HAP-1 (cell line): ENCODE measurements at regions of chr17 and their contacts with region 1.

Region 1: DNA sequence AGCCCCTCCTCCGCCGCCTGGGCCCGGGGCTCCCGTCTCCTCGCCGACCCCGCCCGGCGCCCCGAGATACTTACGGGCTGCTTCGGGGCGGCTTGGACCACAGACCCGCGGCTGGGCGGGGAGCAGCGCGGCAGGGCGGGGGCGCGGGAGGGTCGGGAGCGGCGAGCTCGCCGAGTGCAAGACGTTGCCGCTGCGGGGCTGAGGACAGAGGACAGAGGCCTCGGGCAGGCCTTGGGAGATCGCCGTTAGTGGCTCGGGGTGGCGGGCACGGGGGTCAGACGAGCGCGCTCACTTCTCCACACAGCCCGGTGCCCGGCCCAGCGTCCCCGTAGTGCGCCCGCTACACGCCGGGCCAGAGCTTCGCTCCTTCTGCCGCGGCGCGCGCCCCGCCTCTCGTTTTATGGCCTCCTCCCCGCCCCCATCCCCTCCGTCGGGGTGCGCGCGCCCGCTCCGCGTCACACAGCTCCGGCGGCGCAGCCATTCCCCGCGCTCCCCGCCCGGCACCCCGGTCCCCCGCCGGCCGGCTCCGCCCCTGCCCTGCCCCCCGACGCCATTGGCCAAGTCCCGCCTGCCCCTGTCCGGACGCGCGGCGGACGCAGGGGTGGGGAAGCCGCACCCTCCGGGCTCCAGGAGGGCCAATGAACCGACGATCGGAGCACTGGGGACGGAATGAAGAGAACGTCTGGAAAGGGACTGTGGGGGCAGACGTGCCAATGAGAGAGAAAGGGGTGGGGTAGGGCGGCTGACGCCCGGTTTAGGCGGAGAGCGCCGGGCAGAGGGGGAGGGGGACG is at the start of gene TOB1:
- DNase-seq: peak; percentile 92 to 98
- H3K4me3 ChIP-seq: peak within 1 kb of the TSS; percentile 70
- H3K4me1 ChIP-seq: peaks cover 23% of the 10 kb centered on the region
- H3K27me3 ChIP-seq: no peaks in the 10 kb centered on the region

Region 2: DNA sequence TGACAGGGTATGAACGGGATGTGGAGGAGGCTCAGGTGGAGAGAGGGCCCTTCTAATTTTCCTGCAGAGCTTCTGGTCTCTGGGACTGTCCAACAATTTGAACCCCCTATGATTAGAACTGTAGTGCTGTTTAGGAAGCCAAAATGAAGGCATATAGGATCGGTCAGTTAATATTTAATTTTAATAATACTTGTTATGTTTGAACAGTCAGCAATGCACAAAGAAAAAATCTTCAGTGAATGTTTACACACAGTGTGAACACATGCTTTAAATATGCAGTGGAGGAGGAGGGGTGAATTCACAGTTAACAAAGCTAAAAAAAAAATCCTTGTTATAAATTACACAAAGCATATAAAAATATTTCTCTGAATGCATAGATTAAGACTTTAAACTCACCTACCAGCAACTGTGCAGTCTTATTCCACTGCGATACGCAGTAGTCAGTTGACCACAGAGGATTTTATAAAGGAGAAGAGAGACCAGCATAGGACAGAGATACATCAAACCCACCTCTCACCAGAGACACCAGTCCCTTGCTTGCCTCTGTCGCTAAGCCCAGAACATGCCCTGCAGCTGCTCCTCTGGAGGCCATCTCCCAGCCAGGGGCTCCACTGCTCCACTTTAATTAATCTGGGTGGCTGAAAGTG is 173.0 kb before region 1 on chr17:
- in situ Hi-C with region 1: no loop called
- DNase-seq: no peak
- H3K4me3 ChIP-seq: no peak overlapping the region
- H3K4me1 ChIP-seq: no peaks in the 10 kb centered on the region
- H3K27me3 ChIP-seq: no peaks in the 10 kb centered on the region

Region 3: GRCh38 chr17:50771991-50772785 is 94.0 kb before region 1 on chr17:
- in situ Hi-C with region 1: no loop called
- DNase-seq: no peak
- H3K4me3 ChIP-seq: no peak overlapping the region
- H3K4me1 ChIP-seq: no peaks in the 10 kb centered on the region
- H3K27me3 ChIP-seq: no peaks in the 10 kb centered on the region

Region 4: DNA sequence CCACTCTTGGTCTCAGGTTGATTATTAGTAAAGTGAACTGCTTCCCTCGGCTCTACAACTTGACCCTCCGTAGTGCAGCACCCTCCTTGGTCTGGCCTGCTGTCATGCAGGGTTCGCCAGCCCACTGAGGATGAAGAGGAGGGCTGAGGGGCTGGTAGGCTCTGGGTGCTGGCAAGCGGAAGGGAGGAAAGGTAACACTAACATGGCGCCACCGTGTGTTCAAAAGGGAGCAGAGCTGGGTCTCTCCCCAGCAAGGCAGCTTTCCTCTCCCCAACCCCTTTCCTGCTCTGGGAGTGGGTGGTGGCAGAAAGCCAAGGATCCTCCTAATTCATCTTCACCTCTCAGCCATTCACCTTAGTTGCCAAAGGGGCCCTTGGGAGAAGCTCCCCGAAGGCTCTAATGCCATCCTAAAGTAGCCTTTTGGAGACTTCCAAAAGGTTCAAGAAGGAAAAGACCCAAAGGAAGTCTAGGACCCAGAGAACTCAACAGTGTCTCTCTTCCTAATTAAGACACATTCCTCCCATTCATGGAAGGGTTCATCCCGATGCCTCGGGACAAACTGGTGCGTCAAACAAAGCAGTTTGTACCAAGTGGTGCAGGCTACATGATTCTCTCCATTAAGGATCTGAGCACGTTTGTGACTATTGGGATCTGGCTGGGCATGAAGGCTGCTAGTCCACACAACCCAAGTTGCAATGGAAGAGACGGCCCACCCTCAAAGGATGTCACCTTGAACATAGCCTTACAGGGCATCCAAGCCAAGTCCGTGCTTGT is 90.8 kb after region 1 on chr17:
- in situ Hi-C with region 1: loop called (anchors 5 kb)
- DNase-seq: peak; percentile 66 to 83
- H3K4me3 ChIP-seq: no peak overlapping the region
- H3K4me1 ChIP-seq: no peaks in the 10 kb centered on the region
- H3K27me3 ChIP-seq: no peaks in the 10 kb centered on the region

Region 5: GRCh38 chr17:51153210-51154072 is 287.3 kb after region 1 on chr17 and contains the start of gene NME1:
- in situ Hi-C with region 1: loop called (anchors 10 kb)
- DNase-seq: peak; percentile 96 to 100
- H3K4me3 ChIP-seq: peak within 1 kb of the TSS; percentile 79
- H3K4me1 ChIP-seq: peaks cover 13% of the 10 kb centered on the region
- H3K27me3 ChIP-seq: no peaks in the 10 kb centered on the region